ENCODE measurements at regions of chr7 and their contacts with region 1.

Region 1: DNA sequence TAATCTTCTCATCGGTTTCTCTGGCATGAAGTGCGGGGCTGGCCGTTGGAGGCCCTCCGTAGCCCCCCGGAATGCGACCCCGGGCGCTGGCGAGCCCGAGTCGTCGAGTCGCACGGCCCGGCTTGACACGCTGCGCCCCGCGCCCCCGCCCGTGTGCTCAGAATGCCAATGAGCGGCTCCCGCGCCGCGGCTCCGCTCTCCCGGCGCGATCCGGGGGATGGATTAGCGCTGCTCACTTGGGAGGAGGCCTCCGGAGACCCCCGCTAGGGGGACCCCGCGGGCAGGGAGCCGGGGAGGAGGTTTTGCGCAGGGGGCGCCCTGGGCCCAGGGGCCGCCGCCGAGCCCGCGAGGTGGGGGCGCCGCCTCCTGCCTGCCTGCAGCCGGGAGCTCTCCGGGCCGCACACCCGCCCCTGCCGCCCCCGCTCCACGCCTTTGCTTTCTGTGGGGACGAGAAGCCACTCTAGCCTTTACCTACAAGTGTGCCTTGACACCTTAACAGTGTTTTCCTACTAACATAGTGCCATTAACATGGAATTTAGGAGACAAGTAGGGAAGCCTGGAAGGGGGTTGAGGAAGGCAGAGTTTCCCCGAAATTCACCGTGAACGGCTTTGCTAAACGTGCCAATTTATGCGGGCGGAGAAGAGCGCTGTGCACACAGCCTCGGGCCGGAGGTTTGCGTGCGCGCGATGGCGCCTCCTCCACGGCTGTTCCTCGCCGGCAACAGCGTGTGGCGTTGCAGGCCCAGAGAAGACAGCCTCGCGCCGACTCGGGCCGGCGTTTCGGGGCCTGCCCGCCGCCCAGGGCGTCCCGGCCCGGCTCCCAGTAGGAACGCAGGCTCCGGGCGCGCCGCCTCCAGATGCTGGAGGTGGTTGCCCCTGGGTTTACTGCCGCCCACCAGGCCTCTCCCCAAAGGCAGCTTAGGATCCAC is 7.1 kb downstream of the SHH start:
- DNase-seq: peak; percentile 65
- ATAC-seq: peak; percentile 85
- H3K4me3 ChIP-seq: peak overlapping the region; percentile 38
- H3K27ac ChIP-seq: no peak overlapping the region
- H3K4me1 ChIP-seq: peaks cover 5% of the 10 kb centered on the region; the same call in 1 of the 2 replicates
- H3K27me3 ChIP-seq: peaks cover 74% of the 10 kb centered on the region
- CTCF ChIP-seq: peak; percentile 60
- POLR2A ChIP-seq: no peak
- RAD21 ChIP-seq: peak; percentile 65

Region 2: DNA sequence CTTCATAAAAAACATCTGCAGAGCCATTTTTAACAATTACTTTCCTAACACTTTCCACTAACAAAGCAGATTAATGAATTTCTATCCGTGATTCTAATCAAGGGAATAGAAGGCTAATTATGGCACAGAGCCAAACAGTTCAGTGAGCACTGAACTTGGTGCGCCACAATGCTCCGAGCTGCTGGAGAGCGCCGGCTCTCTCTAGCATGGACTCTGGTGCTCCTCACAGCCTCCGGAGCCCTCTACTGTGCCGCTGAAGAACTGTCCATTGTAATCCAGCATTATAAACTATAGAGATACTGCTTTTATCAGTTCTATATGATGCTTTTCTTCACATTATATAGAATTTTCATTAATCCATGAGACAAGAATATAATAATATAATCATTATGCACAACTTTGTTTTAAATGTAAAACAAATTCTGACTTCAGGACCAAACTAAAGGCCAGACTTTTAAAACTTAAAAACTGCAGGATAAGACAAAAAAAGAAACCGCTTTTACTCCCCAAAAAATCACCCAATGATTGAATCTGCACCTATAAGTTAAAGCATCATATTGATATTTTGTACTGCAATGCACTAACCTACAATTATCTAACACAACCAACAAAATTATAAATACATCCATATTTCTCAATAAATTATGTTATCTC is 959.0 kb after region 1 on chr7:
- CTCF ChIA-PET with region 1: no interaction called
- POLR2A ChIA-PET with region 1: no interaction called
- dilution Hi-C with region 1: no loop called
- in situ Hi-C with region 1: no loop called
- intact Hi-C with region 1: loop called (anchors 2 kb)
- DNase-seq: peak; percentile 78
- ATAC-seq: peak; percentile 100
- H3K4me3 ChIP-seq: no peak overlapping the region
- H3K27ac ChIP-seq: no peak overlapping the region
- H3K4me1 ChIP-seq: no peaks in the 10 kb centered on the region
- H3K27me3 ChIP-seq: no peaks in the 10 kb centered on the region
- CTCF ChIP-seq: peak; percentile 89
- POLR2A ChIP-seq: 0 out of 2 replicates have a peak, but pooled peaks have one; percentile 38
- RAD21 ChIP-seq: peak; percentile 96

Region 3: DNA sequence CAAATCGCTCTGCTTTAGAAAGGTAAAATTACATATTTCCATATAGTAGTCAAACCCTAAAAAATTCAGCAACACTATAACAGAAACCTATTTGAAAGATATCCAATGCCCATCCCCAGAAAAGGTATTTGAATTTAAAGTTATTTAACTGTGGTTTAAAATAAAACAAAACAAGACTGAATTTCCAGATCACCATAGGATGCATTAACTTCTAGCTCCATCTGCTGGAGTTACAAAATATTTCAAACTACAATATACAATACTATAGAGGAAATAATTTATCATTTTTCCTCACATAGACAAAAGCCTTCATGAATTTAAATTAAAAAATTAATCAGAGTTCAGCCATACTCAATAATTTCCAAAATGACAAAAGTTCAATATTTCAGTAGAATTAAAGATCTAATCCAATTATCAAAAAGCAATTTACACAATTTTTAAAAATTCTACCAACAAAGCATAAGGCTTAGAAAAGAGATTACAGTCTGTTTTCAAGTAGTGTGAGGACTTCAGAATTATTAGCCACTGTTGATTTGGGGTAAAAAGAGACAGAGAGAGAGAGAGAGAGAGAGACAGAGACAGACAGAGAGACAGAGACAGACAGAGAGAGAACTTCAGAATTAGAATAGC is 1011.9 kb after region 1 on chr7:
- CTCF ChIA-PET with region 1: no interaction called
- POLR2A ChIA-PET with region 1: no interaction called
- dilution Hi-C with region 1: no loop called
- in situ Hi-C with region 1: loop called (anchors 5 kb)
- intact Hi-C with region 1: loop called (anchors 2 kb)
- DNase-seq: peak; percentile 38
- ATAC-seq: peak; percentile 72
- H3K4me3 ChIP-seq: no peak overlapping the region
- H3K27ac ChIP-seq: no peak overlapping the region
- H3K4me1 ChIP-seq: no peaks in the 10 kb centered on the region
- H3K27me3 ChIP-seq: no peaks in the 10 kb centered on the region
- CTCF ChIP-seq: peak; percentile 67
- POLR2A ChIP-seq: no peak
- RAD21 ChIP-seq: peak; percentile 79